Natural killer cell (primary cell): ENCODE measurements at regions of chr11 and their contacts with region 1.

Region 1: GRCh38 chr11:1572197-1573076 is at the start of gene DUSP8:
- DNase-seq: peak; percentile 97 to 98
- ATAC-seq: peak; percentile 50 to 75 (median 67)
- H3K4me3 ChIP-seq: peak within 1 kb of the TSS; percentile 41
- H3K4me3 Mint-ChIP-seq: peak within 1 kb of the TSS; percentile 78
- H3K27ac ChIP-seq: peak within 1 kb of the TSS; percentile 80
- H3K27ac Mint-ChIP-seq: peak within 1 kb of the TSS; percentile 76 to 94
- H3K4me1 ChIP-seq: peaks cover 53% of the 10 kb centered on the region
- H3K4me1 Mint-ChIP-seq: peaks cover 10 to 45% of the 10 kb centered on the region in 2 donors
- H3K27me3 ChIP-seq: peaks cover 9% of the 10 kb centered on the region
- H3K27me3 Mint-ChIP-seq: peaks cover 0 to 17% of the 10 kb centered on the region in 2 donors
- CTCF ChIP-seq: no peak
- total RNA-seq, gene DUSP8: 24.1 to 47.3 (median 38.4) TPM

Region 2: GRCh38 chr11:1202776-1203504 is 369.5 kb before region 1 on chr11:
- intact Hi-C with region 1: loop called (anchors 5 kb)
- DNase-seq: peak; percentile 64 to 81
- ATAC-seq: peak; percentile 78 to 96 (median 95)
- H3K4me3 ChIP-seq: no peak overlapping the region
- H3K4me3 Mint-ChIP-seq: no peak overlapping the region
- H3K27ac ChIP-seq: no peak overlapping the region
- H3K27ac Mint-ChIP-seq: no peak overlapping the region
- H3K4me1 ChIP-seq: peaks cover 7% of the 10 kb centered on the region
- H3K4me1 Mint-ChIP-seq: no peaks in the 10 kb centered on the region
- H3K27me3 ChIP-seq: no peaks in the 10 kb centered on the region
- H3K27me3 Mint-ChIP-seq: no peaks in the 10 kb centered on the region
- CTCF ChIP-seq: peak; percentile 86

Region 3: GRCh38 chr11:1546536-1547400 is 25.7 kb before region 1 on chr11:
- intact Hi-C with region 1: loop called (anchors 2 kb)
- DNase-seq: peak in 1 of 2 donors; percentile 78
- ATAC-seq: peak; percentile 70 to 76 (median 75)
- H3K4me3 ChIP-seq: no peak overlapping the region
- H3K4me3 Mint-ChIP-seq: no peak overlapping the region
- H3K27ac ChIP-seq: no peak overlapping the region
- H3K27ac Mint-ChIP-seq: no peak overlapping the region
- H3K4me1 ChIP-seq: peaks cover 17% of the 10 kb centered on the region
- H3K4me1 Mint-ChIP-seq: no peaks in the 10 kb centered on the region
- H3K27me3 ChIP-seq: peaks cover 17% of the 10 kb centered on the region
- H3K27me3 Mint-ChIP-seq: peaks cover 18 to 27% of the 10 kb centered on the region in 2 donors
- CTCF ChIP-seq: peak; percentile 68

Region 4: DNA sequence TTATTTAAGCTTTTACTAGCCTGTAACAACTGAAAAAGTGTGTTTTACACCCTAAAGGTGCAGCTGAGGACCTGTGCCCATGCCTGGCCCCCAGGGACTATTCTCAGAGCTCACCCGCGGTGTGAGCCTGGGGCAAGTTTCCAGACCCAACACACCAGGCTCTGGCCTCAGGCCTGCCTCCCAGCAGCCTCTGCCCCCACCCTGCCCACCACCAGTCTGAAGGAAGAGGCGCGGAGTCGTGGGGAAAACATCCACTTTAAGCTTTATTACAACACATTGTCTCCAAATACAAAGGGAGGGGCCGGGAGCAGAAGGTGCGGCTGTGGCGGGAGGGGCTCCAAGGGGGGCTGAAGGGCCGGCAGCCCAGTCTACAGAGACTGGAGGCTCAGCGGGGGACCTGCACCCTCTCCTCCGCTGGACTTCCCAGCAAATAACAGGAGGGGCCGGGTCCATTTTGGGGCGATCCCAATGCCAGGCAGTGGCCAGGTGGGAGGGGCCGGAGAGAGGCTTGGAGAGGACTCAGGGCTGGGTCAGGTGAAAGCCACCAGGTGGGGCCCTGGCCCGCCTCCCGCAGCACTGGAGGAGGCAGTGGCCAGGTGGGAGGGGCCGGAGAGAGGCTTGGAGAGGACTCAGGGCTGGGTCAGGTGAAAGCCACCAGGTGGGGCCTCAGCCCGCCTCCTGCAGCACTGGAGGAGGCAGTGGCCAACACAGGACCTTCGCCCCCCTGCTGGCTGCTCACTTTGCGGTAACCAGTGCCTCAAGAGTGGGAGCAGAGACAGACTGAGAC is 18.4 kb before region 1 on chr11:
- intact Hi-C with region 1: loop called (anchors 2 kb)
- DNase-seq: peak in 1 of 2 donors; percentile 17
- ATAC-seq: peak in 1 of 3 donors; percentile 5
- H3K4me3 ChIP-seq: no peak overlapping the region
- H3K4me3 Mint-ChIP-seq: peak overlapping the region; percentile 4
- H3K27ac ChIP-seq: no peak overlapping the region
- H3K27ac Mint-ChIP-seq: no peak overlapping the region
- H3K4me1 ChIP-seq: no peaks in the 10 kb centered on the region
- H3K4me1 Mint-ChIP-seq: no peaks in the 10 kb centered on the region
- H3K27me3 ChIP-seq: peaks cover 5% of the 10 kb centered on the region
- H3K27me3 Mint-ChIP-seq: peaks cover 11 to 28% of the 10 kb centered on the region in 2 donors
- CTCF ChIP-seq: no peak

Region 5: GRCh38 chr11:1852877-1853276 is 280.4 kb after region 1 on chr11 and contains the start of gene LSP1:
- intact Hi-C with region 1: loop called (anchors 5 kb)
- DNase-seq: peak; percentile 76 to 93
- ATAC-seq: peak; percentile 57 to 77 (median 71)
- H3K4me3 ChIP-seq: peak within 1 kb of the TSS; percentile 91
- H3K4me3 Mint-ChIP-seq: peak within 1 kb of the TSS; percentile 100
- H3K27ac ChIP-seq: peak within 1 kb of the TSS; percentile 94
- H3K27ac Mint-ChIP-seq: peak within 1 kb of the TSS; percentile 98 to 99
- H3K4me1 ChIP-seq: peaks cover 92% of the 10 kb centered on the region
- H3K4me1 Mint-ChIP-seq: peaks cover 43 to 74% of the 10 kb centered on the region in 2 donors
- H3K27me3 ChIP-seq: no peaks in the 10 kb centered on the region
- H3K27me3 Mint-ChIP-seq: no peaks in the 10 kb centered on the region
- CTCF ChIP-seq: no peak
- total RNA-seq, gene LSP1: 487 to 595 (median 536) TPM